AG04449 (cell line): ENCODE measurements at regions of chr12 and their contacts with region 1.

Region 1: GRCh38 chr12:52582971-52583456 is 9.4 kb upstream of the KRT74 start:
- DNase-seq: peak; percentile 4
- H3K4me3 ChIP-seq: no peak overlapping the region
- CTCF ChIP-seq: peak; percentile 82

Region 2: GRCh38 chr12:52566847-52567291 is 16.1 kb before region 1 on chr12:
- CTCF ChIA-PET with region 1: interaction called, 79 read pairs
- POLR2A ChIA-PET with region 1: no interaction called
- DNase-seq: no peak
- H3K4me3 ChIP-seq: no peak overlapping the region
- CTCF ChIP-seq: no peak

Region 3: DNA sequence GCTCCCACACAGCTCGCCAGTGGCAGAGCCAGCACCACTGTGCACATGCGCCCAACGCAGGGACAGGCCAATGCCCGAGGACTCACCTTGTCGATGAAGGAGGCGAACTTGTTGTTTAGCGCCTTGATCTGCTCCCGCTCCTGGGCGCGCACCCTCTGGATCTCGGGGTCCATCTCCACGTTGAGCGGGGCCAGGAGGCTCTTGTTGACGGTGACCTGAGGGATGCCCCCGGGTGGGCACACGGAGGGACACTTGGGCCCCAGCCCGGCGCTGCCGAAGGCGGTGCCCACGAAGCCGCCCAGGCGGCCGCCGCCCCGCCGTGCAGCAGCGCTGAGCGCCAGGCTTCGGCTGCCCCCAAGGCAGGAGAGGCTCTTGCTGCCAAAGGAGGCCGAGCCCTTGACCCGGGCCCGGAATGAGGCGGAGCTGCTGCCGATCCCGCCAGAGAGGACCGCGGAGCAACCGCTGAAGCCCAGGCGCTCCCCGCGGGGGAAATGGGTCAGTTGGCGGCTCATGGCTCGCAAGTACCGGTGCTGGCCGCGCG is 18.0 kb after region 1 on chr12 and contains the start of gene KRT72:
- CTCF ChIA-PET with region 1: interaction called, 11 read pairs
- POLR2A ChIA-PET with region 1: no interaction called
- DNase-seq: no peak
- H3K4me3 ChIP-seq: no peak within 1 kb of the TSS
- CTCF ChIP-seq: no peak